CD4-positive, alpha-beta memory T cell (primary cell): ENCODE measurements at regions of chr1 and their contacts with region 1.

Region 1: DNA sequence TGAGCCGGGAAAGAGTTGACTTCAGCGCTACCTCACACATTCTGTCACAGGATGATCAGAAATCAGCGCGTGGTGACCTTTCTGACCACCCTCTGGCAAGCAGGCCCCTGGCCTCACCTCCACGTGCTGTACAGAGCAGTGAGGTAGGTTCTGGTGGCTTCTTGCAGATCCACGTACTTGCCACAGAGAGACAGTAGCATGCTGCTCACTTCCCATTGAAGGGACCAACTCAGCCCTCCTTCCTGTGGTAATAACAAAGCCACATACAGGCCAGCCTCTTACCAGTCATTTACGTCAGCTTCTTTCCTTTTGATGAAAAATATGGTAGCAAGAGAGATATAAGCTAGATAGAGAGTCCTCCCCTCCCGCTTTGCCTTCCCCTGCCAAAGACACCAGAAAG is 200.7 kb downstream of the CHRM3 start:
- DNase-seq: peak; percentile 45 to 59 (median 50)
- H3K4me3 ChIP-seq: no peak overlapping the region
- H3K4me3 Mint-ChIP-seq: peak overlapping the region in 3 of 8 donors; percentile 14 to 34 (median 28)
- H3K27ac ChIP-seq: no peak overlapping the region
- H3K27ac Mint-ChIP-seq: peak overlapping the region in 4 of 7 donors; percentile 43 to 77 (median 62)
- H3K4me1 ChIP-seq: peaks cover 8% of the 10 kb centered on the region
- H3K4me1 Mint-ChIP-seq: peaks cover 5 to 11% (median 7%) of the 10 kb centered on the region in 4 donors
- H3K27me3 ChIP-seq: no peaks in the 10 kb centered on the region
- H3K27me3 Mint-ChIP-seq: peaks cover 0 to 3% of the 10 kb centered on the region in 2 donors

Region 2: GRCh38 chr1:239805851-239806772 is 219.0 kb after region 1 on chr1:
- CTCF ChIA-PET with region 1: interaction called, 5 read pairs
- POLR2A ChIA-PET with region 1: no interaction called
- intact Hi-C with region 1: loop called (anchors 10 kb)
- DNase-seq: no peak
- H3K4me3 ChIP-seq: no peak overlapping the region
- H3K4me3 Mint-ChIP-seq: peak overlapping the region in 2 of 8 donors; percentile 17 to 41
- H3K27ac ChIP-seq: no peak overlapping the region
- H3K27ac Mint-ChIP-seq: peak overlapping the region in 1 of 7 donors; percentile 76
- H3K4me1 ChIP-seq: peaks cover 13% of the 10 kb centered on the region
- H3K4me1 Mint-ChIP-seq: peaks cover 13 to 17% (median 15%) of the 10 kb centered on the region in 4 donors
- H3K27me3 ChIP-seq: no peaks in the 10 kb centered on the region
- H3K27me3 Mint-ChIP-seq: peaks cover 0 to 3% of the 10 kb centered on the region in 2 donors